ENCODE measurements at regions of chr15 and their contacts with region 1.

Region 1: DNA sequence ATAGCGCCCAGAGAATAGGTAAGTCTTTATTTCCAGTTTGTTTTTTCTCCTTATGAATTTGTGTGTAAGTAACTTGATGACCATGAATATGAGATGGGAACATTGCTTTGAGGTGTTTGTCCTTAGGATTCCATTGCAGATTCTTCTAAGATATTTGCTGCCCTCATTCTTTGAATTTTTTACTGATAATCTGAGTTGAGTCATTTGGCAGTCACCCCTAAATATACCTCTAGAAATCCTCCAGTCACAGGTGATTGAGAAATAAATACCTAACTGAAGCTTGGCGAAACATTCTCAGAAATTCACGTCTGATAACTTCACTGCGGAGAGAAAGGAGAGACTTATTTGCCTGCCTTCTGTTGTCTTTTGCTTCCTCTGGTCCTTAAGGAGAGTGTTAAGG is 345.5 kb downstream of the SQOR start:
- DNase-seq: no peak
- H3K4me3 ChIP-seq: no peak overlapping the region
- H3K27ac ChIP-seq: no peak overlapping the region
- H3K4me1 ChIP-seq: no peaks in the 10 kb centered on the region
- H3K27me3 ChIP-seq: no peaks in the 10 kb centered on the region
- CTCF ChIP-seq: no peak
- POLR2A ChIP-seq: no peak

Region 2: GRCh38 chr15:45943240-45943639 is 37.1 kb before region 1 on chr15:
- intact Hi-C with region 1: loop called (anchors 2 kb)
- DNase-seq: no peak
- H3K4me3 ChIP-seq: no peak overlapping the region
- H3K27ac ChIP-seq: no peak overlapping the region
- H3K4me1 ChIP-seq: no peaks in the 10 kb centered on the region
- H3K27me3 ChIP-seq: no peaks in the 10 kb centered on the region
- CTCF ChIP-seq: no peak
- POLR2A ChIP-seq: no peak

Region 3: GRCh38 chr15:47331841-47332393 is 1351.5 kb after region 1 on chr15:
- intact Hi-C with region 1: no loop called
- DNase-seq: no peak
- H3K4me3 ChIP-seq: no peak overlapping the region
- H3K27ac ChIP-seq: no peak overlapping the region
- H3K4me1 ChIP-seq: no peaks in the 10 kb centered on the region
- H3K27me3 ChIP-seq: no peaks in the 10 kb centered on the region
- CTCF ChIP-seq: no peak
- POLR2A ChIP-seq: no peak

Measured in breast epithelium (tissue), 4 donors.